ENCODE measurements at regions of chr16 and their contacts with region 1.

Region 1: GRCh38 chr16:9008601-9009260 is 45.0 kb upstream of the USP7 start:
- H3K4me3 ChIP-seq: no peak overlapping the region
- H3K27ac ChIP-seq: no peak overlapping the region
- H3K4me1 ChIP-seq: no peaks in the 10 kb centered on the region
- CTCF ChIP-seq: peak; percentile 86

Region 2: GRCh38 chr16:8751481-8752311 is 257.0 kb before region 1 on chr16:
- CTCF ChIA-PET with region 1: no interaction called
- POLR2A ChIA-PET with region 1: no interaction called
- H3K4me3 ChIP-seq: no peak overlapping the region
- H3K27ac ChIP-seq: no peak overlapping the region
- H3K4me1 ChIP-seq: no peaks in the 10 kb centered on the region
- CTCF ChIP-seq: no peak

Region 3: GRCh38 chr16:8892101-8892575 is 116.6 kb before region 1 on chr16:
- CTCF ChIA-PET with region 1: interaction called, 11 read pairs
- POLR2A ChIA-PET with region 1: interaction called, 3 read pairs
- H3K4me3 ChIP-seq: no peak overlapping the region
- H3K27ac ChIP-seq: no peak overlapping the region
- H3K4me1 ChIP-seq: no peaks in the 10 kb centered on the region
- CTCF ChIP-seq: no peak

Region 4: GRCh38 chr16:8905168-8905762 is 103.5 kb before region 1 on chr16:
- CTCF ChIA-PET with region 1: interaction called, 18 read pairs
- POLR2A ChIA-PET with region 1: no interaction called
- H3K4me3 ChIP-seq: no peak overlapping the region
- H3K27ac ChIP-seq: no peak overlapping the region
- H3K4me1 ChIP-seq: no peaks in the 10 kb centered on the region
- CTCF ChIP-seq: no peak

Region 5: GRCh38 chr16:8996891-8997290 is 11.8 kb before region 1 on chr16:
- CTCF ChIA-PET with region 1: interaction called, 10 read pairs
- POLR2A ChIA-PET with region 1: interaction called, 3 read pairs
- H3K4me3 ChIP-seq: no peak overlapping the region
- H3K27ac ChIP-seq: no peak overlapping the region
- H3K4me1 ChIP-seq: no peaks in the 10 kb centered on the region
- CTCF ChIP-seq: no peak

Region 6: DNA sequence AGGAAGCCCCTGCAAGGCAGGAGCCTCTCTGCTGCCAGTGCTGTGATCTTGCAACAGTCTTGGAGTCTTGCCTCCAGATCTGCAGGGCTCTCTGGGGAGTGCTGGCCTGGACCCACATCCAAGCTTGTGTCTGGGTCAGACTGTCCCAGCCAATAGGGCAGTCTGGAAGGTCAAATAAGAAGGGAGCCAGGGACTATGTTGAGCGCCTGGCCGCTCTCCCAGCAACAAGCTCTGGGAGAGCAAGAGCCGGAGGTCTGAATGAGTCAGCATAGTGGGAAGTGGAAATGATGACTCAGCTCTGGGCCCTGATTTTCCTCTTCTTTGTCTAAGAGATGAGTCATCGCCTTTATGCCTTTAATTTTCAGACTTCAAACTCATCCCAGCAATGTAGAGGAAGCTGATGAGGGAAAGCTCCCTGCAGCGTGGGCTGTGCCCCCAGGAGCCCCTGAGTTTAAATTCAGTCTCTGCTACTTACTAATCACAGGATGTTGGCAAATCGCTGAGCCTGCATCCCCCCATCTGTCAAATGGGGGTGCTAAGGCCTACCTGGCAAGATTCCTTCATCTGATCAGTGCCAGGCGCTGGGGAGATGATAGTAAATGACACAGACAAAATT is 39.1 kb after region 1 on chr16:
- CTCF ChIA-PET with region 1: interaction called, 10 read pairs
- POLR2A ChIA-PET with region 1: no interaction called
- H3K4me3 ChIP-seq: no peak overlapping the region
- H3K27ac ChIP-seq: no peak overlapping the region; the same call in 1 of the 2 replicates
- H3K4me1 ChIP-seq: peaks cover 6% of the 10 kb centered on the region
- CTCF ChIP-seq: no peak

Region 7: GRCh38 chr16:9248162-9248561 is 239.4 kb after region 1 on chr16:
- CTCF ChIA-PET with region 1: no interaction called
- POLR2A ChIA-PET with region 1: no interaction called
- H3K4me3 ChIP-seq: no peak overlapping the region
- H3K27ac ChIP-seq: no peak overlapping the region
- H3K4me1 ChIP-seq: no peaks in the 10 kb centered on the region
- CTCF ChIP-seq: no peak

Measured in HEK293 (cell line).